HAP-1 (cell line): ENCODE measurements at regions of chr13 and their contacts with region 1.

Region 1: DNA sequence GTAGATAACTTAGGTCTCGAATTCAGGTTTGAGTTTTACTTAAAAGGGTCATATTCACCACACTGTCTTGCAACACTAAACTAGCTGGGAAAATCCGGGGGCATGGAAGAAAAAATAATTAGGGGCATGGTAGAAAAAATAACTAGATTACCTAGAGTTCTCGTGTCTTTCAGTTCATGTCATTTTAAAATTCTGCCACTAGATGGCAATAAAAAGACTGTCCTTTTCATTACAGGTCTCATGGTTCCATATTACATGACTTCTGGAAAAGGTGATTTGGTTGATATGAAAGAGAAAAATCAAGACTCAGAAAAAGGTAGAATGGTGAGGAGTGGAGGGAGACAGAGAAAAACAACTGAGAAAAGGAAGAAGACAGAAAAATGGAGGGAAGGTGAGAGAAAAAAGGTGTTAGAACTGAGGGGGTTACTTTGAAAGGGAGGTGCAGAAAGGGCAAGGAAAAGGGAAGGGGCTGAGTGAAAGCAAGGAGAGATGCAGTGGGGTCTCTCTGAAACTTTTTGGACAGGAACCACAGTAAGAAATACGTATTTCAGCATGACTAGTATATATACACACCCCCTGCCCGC is 299.0 kb downstream of the KLF12 start:
- DNase-seq: peak in 1 of 2 experiments; percentile 57
- H3K4me3 ChIP-seq: no peak overlapping the region
- H3K4me1 ChIP-seq: peaks cover 5% of the 10 kb centered on the region; the same call in 1 of the 2 replicates
- H3K27me3 ChIP-seq: no peaks in the 10 kb centered on the region; the same call in 1 of the 2 replicates

Region 2: GRCh38 chr13:73880365-73880764 is 45.1 kb after region 1 on chr13:
- in situ Hi-C with region 1: no loop called
- DNase-seq: no peak
- H3K4me3 ChIP-seq: no peak overlapping the region
- H3K4me1 ChIP-seq: no peaks in the 10 kb centered on the region
- H3K27me3 ChIP-seq: no peaks in the 10 kb centered on the region

Region 3: DNA sequence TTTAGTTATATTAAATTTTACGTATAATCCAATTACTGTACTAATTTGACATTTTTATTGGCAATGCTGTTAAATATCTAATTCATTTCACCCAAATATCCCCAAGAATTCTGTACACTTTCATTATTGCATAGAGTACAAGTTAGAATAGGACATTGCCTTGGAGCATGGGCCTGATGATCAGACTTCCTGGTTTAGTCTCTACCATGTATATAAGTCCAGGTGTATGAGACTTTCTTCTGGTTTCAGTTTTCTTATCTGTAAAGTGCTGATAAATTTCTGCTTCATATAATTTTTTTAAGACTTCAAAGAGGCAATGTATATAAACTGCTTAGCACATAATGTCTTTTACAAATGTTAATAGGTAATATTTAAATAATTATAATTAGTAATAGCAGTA is 119.6 kb after region 1 on chr13:
- in situ Hi-C with region 1: no loop called
- DNase-seq: no peak
- H3K4me3 ChIP-seq: no peak overlapping the region
- H3K4me1 ChIP-seq: no peaks in the 10 kb centered on the region
- H3K27me3 ChIP-seq: no peaks in the 10 kb centered on the region

Region 4: GRCh38 chr13:74287724-74288169 is 452.5 kb after region 1 on chr13:
- in situ Hi-C with region 1: loop called (anchors 25 kb)
- DNase-seq: peak; percentile 66 to 80
- H3K4me3 ChIP-seq: no peak overlapping the region
- H3K4me1 ChIP-seq: peaks cover 9% of the 10 kb centered on the region
- H3K27me3 ChIP-seq: no peaks in the 10 kb centered on the region